Activated T-helper 2 cell treated with anti-CD3 and anti-CD28 coated beads, Interferon-gamma antibody, Interleukin-2, Interleukin-4, amounts not matched to agents 10 μg/mL and 5 μg/mL and 100 μg/mL, durations not matched to agents 14 hours and 24 hours and 36 hours (primary cell): ENCODE measurements at regions of chr17 and their contacts with region 1.

Region 1: DNA sequence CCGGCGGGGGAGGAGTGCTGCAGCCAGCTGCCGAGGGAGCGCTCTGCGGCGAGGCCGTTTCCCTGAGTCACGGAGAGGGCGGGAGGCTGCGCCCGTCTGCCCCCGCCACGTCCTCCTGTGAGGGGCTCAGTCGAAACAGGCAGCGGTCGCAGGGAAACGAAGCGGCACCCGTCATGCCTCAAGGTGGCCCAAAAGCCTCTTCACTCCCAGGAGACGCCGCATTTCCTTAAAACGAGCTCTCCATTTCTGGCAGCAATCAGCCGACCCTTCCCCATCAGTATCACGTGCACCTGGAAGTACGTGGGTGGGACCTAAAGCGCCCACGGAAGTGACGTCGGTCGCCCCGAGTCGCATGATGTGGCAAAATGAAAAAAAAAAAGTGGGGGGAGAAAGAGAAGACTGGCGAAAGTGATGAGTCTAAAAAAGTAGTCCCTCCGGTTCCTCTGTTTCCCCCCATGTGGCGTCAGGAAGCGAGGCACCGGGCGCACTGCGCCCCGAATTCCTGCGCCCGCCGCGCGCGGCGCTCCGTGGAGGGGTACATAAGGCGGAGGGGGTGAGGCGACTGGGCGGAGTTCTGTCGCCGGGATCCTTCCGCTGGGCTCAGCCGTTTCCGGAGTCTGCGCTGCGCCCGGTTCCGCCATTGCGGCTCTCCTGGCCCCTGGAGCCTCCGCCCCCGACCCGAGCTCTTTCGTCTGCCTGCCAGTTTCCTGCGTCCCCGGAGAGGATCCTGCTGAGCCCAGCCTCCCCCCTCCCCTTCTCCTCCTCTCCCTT is at the start of gene CLTC:
- DNase-seq: peak; percentile 92
- H3K4me3 Mint-ChIP-seq: peak within 1 kb of the TSS; percentile 91
- H3K27ac Mint-ChIP-seq: peak within 1 kb of the TSS; percentile 95
- H3K4me1 Mint-ChIP-seq: peaks cover 43% of the 10 kb centered on the region
- H3K27me3 Mint-ChIP-seq: no peaks in the 10 kb centered on the region
- total RNA-seq, gene CLTC: 188 and 193 TPM in 2 replicates

Region 2: DNA sequence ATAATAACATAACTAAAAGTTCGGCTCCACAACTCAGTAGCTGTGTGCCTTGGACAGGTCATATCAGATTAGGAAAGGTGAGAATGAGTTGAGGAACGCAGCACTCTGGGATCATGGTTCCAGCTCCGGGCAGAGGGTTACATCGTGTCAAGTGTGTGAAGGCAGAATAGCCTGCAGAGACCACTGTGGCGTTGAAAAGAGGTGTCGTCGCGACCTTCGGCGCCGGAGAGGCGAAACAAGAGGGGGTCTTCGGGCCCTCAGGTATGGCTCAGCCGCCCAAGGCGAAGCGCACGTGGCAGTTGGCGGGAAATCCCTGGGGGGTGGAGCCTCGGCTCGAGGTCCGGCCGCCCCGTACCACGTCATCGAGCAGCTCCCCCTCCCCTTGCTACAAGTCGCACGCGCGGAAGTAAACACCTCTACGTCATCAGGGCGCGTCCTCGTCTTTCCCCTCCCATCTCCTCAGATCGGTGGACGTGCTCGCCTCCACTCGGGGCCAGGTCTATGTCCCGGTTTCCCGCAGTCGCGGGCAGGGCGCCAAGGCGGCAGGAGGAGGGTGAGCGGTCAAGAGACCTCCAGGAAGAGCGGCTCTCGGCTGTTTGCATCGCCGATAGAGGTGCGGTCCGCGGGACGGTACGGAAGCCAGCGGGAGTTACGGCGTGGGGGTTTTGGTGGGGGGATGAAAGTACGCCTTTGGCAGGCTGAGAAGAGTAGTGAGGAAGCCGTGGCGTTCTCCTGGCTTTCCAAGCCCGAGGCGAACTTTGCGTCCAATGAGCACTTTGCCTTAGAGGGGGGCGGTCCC is 54.1 kb before region 1 on chr17 and contains the start of gene DHX40:
- intact Hi-C with region 1: loop called (anchors 1 kb)
- DNase-seq: peak; percentile 91
- H3K4me3 Mint-ChIP-seq: peak within 1 kb of the TSS; percentile 99
- H3K27ac Mint-ChIP-seq: peak within 1 kb of the TSS; percentile 96
- H3K4me1 Mint-ChIP-seq: peaks cover 18% of the 10 kb centered on the region
- H3K27me3 Mint-ChIP-seq: no peaks in the 10 kb centered on the region
- total RNA-seq, gene DHX40: 16.7 and 18.2 TPM in 2 replicates

Region 3: GRCh38 chr17:59634632-59635541 is 15.4 kb after region 1 on chr17:
- intact Hi-C with region 1: loop called (anchors 2 kb)
- DNase-seq: no peak
- H3K4me3 Mint-ChIP-seq: no peak overlapping the region
- H3K27ac Mint-ChIP-seq: peak overlapping the region; percentile 55
- H3K4me1 Mint-ChIP-seq: peaks cover 33% of the 10 kb centered on the region
- H3K27me3 Mint-ChIP-seq: no peaks in the 10 kb centered on the region

Region 4: DNA sequence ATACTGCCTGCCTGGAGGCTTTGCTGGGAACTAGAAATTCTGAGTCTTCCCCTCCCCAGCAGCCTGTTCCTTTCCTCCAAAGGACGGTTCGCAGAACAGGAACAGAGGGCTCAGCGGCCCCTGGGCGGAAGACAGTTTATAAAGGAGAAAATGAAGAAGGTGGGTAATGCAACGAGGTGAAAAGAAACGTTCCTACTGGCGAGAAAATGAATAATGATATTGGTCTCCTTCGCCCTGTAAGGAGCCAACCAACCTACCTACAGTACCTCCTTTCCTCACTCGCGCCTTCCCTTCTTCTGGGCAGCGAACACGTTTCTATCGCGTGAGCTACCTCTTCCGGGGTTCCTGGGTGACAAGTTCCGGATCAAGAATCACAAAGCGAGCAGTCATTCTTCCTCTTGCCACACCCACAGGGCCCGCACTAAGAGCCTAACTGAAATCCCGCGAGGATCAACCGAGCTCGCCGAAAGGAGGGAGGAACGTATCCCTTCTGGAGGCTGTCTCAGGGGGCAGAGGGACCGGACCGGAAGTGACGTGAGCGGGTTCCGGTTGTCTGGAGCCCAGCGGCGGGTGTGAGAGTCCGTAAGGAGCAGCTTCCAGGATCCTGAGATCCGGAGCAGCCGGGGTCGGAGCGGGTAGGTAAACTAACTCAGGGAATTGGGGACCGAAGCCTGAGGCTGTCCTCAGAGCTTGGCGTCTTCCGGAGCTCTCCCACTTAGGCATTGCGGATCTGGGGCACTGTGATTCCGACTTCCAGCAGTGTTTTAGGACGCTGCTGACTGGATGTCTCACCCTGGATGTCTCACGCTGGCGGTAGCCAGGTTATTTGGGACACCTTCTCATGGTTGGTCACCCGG is 87.9 kb after region 1 on chr17 and contains the starts of genes PTRH2 and VMP1:
- intact Hi-C with region 1: loop called (anchors 1 kb)
- DNase-seq: peak; percentile 93
- H3K4me3 Mint-ChIP-seq: peak within 1 kb of the TSS; percentile 95
- H3K27ac Mint-ChIP-seq: peak within 1 kb of the TSS; percentile 85
- H3K4me1 Mint-ChIP-seq: peaks cover 43% of the 10 kb centered on the region
- H3K27me3 Mint-ChIP-seq: no peaks in the 10 kb centered on the region
- total RNA-seq, gene PTRH2: 48.3 and 50.3 TPM in 2 replicates
- total RNA-seq, gene VMP1: 479 and 499 TPM in 2 replicates

Region 5: DNA sequence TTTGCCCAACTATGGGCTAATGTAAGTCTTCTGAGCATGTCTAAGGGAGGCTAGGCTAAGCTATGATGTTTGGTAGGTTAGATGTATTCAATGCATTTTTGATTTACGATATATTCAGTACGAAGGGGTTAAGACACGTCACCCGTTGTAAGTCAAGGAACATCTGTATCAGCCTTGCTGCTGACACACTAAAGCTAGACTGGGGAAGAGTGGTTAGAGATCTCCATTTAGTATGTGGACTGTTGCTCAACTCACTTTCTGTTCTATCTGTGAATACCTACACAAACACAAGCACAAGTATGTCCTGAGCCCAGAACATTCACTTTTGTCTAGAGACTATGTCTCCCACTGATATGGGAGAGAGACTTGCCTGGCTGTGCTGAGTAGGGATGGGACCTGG is 159.5 kb after region 1 on chr17:
- intact Hi-C with region 1: no loop called
- DNase-seq: no peak
- H3K4me3 Mint-ChIP-seq: peak overlapping the region; percentile 4
- H3K27ac Mint-ChIP-seq: peak overlapping the region; percentile 87
- H3K4me1 Mint-ChIP-seq: peaks cover 47% of the 10 kb centered on the region
- H3K27me3 Mint-ChIP-seq: no peaks in the 10 kb centered on the region

Region 6: DNA sequence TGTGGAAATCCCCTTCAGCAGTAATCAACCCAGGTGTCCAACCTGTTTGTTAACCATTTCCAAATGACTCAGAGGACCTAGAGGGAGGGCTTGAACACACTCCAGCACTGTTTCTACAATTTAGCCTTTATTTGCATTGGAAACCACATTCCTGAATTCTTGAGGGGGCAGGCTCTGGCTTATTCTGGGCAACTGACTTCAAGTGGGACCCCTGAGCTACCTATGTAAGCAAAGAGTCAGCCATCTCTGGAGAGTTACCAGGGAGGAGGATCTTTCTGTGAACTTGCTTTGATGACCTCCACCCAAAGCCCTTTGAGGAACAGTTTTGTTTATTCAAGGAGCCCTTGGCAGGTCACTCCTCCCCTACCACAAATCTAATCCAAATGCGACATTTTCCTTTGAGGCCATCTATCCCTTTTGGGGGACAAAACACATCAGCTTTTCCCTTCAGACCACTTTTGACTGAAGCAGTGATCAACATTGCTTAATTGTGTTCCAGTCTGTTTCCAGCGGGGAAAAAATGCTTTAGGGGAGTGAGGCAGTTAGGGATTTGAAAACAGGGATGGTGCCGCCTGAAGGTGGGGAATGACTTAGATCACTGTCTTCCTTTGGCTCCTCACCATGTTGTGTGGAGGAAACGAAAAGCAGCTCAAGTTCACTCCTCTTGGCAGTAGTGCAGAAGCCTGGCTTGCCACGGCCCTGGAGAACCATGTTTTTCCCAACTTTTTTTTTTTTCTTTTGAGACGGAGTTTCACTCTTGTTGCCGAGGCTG is 227.1 kb after region 1 on chr17:
- intact Hi-C with region 1: loop called (anchors 2 kb)
- DNase-seq: no peak
- H3K4me3 Mint-ChIP-seq: peak overlapping the region; percentile 35
- H3K27ac Mint-ChIP-seq: peak overlapping the region; percentile 69
- H3K4me1 Mint-ChIP-seq: peaks cover 48% of the 10 kb centered on the region
- H3K27me3 Mint-ChIP-seq: no peaks in the 10 kb centered on the region